ENCODE measurements at regions of chr10 and their contacts with region 1.

Region 1: DNA sequence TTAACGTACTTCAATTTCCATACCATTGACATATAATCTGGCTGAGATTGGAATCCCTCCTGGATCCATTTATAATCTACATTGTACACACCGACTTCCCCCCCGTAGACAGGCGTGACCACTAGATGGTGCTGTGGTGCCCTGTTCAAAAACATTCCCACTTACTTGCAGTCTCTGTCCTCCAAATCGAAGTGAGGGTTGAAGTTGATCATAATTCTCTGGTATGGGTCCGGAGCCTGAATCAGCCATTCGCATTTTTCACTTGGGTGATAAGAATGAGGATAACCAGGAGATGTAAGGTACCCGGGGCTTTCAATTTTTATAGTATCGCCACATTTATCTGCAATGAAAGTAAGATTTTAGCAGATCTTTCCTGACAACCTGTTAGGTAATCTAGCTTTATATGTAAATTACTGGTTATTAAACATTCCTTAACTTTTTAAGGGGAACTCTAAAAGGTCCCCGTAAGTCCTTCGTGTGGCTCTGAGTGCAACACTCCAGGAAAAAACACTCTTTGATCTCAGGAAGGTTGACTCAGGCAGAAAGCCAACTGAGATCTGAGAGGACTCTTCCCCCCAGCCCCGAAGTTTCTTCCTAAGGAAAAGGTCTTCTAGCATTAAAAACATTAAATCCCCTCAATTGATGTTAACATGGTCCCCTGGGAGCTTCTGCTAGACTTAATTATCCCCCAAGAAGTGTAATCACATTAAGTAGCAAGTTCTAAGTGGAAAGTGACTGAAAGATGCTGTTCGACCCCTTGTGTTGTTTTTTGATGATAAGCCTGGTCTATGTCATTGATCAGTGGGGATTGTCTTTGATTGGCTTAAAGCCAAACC is 3.7 kb downstream of the NRP1 start:
- DNase-seq: peak; percentile 85 to 94
- H3K4me3 ChIP-seq: peak overlapping the region; percentile 70 to 75 (median 72)
- H3K27ac ChIP-seq: peak overlapping the region in 3 of 5 donors; percentile 57 to 93 (median 60)
- H3K4me1 ChIP-seq: peaks cover 7 to 78% (median 44%) of the 10 kb centered on the region in 4 donors
- H3K27me3 ChIP-seq: peaks cover 0 to 9% (median 8%) of the 10 kb centered on the region in 3 donors
- CTCF ChIP-seq: peak in 5 of 7 experiments; percentile 71 to 87 (median 83)
- EP300 ChIP-seq: no peak
- POLR2A ChIP-seq: no peak

Region 2: DNA sequence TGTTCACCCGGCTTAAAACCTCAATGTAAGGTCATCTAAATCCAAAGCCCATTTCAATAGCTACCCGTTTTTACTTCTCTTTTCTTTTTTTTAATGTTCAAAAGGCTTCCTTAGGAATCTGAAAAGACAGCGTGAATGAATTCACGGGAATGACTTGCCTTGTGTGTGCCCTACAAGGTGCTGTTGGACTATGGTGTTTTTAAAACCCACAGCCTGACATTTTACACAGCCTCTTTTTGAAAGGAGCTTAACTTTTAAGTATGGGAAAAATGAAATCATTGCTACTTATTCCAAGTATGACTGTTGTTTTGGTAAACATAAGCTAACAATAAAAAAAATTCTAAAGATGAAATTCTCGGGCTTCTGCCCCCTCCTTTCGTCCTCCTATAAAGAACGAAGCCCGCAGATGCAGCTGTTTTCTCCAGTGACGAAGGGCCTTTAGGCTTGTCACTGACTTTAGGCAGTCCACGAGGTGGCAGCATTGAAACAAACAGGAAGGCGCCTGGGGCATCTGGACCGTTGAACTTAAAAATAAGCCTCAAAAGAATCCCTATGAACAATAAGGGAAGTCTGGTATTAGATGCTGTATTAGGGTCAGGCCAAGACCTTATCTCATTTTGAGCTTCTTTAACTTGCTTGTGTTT is 137.6 kb before region 1 on chr10:
- intact Hi-C with region 1: loop called (anchors 10 kb)
- DNase-seq: peak; percentile 83 to 94
- H3K4me3 ChIP-seq: no peak overlapping the region
- H3K27ac ChIP-seq: peak overlapping the region in 3 of 5 donors; percentile 49 to 84 (median 81)
- H3K4me1 ChIP-seq: peaks cover 36 to 54% (median 45%) of the 10 kb centered on the region in 4 donors
- H3K27me3 ChIP-seq: no peaks in the 10 kb centered on the region
- CTCF ChIP-seq: peak in 5 of 7 experiments; percentile 41 to 73 (median 68)
- EP300 ChIP-seq: no peak
- POLR2A ChIP-seq: no peak

Region 3: GRCh38 chr10:33237736-33238624 is 92.8 kb before region 1 on chr10:
- intact Hi-C with region 1: no loop called
- DNase-seq: no peak
- H3K4me3 ChIP-seq: no peak overlapping the region
- H3K27ac ChIP-seq: peak overlapping the region in 1 of 5 donors; percentile 8
- H3K4me1 ChIP-seq: peaks cover 4 to 42% (median 26%) of the 10 kb centered on the region in 4 donors
- H3K27me3 ChIP-seq: no peaks in the 10 kb centered on the region
- CTCF ChIP-seq: no peak
- EP300 ChIP-seq: no peak
- POLR2A ChIP-seq: no peak

Region 4: DNA sequence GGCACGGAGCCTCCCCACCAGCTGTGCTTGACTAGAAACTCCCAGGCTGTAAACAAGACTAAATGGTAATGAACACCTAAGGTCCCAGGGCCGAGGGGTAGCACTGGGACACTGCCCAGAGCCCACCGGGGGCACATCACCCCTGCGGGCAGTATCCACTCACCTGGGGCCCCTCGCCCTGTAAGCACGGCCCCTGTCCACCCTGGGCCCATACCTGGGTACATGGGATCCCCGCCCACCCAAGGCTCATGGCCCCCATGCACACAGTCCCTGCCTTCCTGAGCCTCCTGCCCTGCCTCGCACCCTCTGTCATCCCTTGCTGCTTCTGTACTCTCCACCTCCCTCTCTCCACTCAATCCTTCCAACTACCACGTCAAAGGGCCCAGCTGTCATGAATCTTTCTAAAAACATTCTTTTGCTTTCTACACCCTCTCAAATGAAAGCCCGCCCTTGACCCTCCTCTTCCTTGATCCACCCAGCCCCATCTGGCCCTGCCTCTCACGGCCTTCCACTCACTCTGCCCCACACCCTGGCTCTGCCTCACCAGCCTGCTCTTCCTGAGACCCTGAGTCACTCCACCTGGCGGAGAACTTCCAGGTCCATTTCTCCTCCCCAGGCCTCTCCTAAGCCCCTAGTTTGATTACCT is 1311.3 kb after region 1 on chr10:
- intact Hi-C with region 1: loop called (anchors 10 kb)
- DNase-seq: no peak
- H3K4me3 ChIP-seq: no peak overlapping the region
- H3K27ac ChIP-seq: no peak overlapping the region
- H3K4me1 ChIP-seq: peaks cover 6 to 35% (median 20%) of the 10 kb centered on the region in 4 donors
- H3K27me3 ChIP-seq: no peaks in the 10 kb centered on the region
- CTCF ChIP-seq: no peak
- EP300 ChIP-seq: no peak
- POLR2A ChIP-seq: no peak